Heart left ventricle (tissue), 16 donors: ENCODE measurements at regions of chr16 and their contacts with region 1.

Region 1: GRCh38 chr16:3857189-3858043 is 23.1 kb downstream of the CREBBP start:
- DNase-seq: no peak
- ATAC-seq: peak; percentile 37 to 85 (median 68)
- H3K4me3 ChIP-seq: no peak overlapping the region
- H3K27ac ChIP-seq: peak overlapping the region in 5 of 12 donors; percentile 4 to 81 (median 11)
- H3K4me1 ChIP-seq: peaks cover 7 to 98% (median 72%) of the 10 kb centered on the region in 12 donors
- H3K27me3 ChIP-seq: no peaks in the 10 kb centered on the region
- CTCF ChIP-seq: no peak
- POLR2A ChIP-seq: no peak

Region 2: DNA sequence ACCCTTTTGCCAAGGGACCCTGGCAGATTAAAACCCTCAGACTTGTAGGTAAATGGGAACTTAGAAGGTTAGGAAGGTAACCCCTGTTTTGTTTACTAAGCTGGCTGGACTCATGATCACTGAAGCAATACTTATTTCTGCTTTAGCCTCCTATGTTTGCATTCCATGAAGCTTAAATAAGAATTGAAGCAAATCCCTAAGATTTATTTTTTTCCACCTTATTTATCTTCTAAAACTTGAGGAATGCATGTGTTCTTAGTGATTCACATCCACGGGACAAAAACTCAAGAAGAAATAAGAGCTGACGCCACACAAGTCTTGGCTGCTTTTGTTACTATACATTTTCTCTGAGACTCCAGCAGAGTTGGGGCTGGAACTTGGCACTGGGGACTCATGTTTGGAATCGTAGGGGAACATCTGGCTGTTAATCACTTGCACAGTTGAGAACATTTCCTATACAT is 321.1 kb before region 1 on chr16:
- intact Hi-C with region 1: no loop called
- DNase-seq: no peak
- ATAC-seq: no peak
- H3K4me3 ChIP-seq: no peak overlapping the region
- H3K27ac ChIP-seq: peak overlapping the region in 7 of 12 donors; percentile 6 to 70 (median 53)
- H3K4me1 ChIP-seq: peaks cover 0 to 9% (median 1%) of the 10 kb centered on the region in 12 donors
- H3K27me3 ChIP-seq: no peaks in the 10 kb centered on the region
- CTCF ChIP-seq: no peak
- POLR2A ChIP-seq: no peak

Region 3: DNA sequence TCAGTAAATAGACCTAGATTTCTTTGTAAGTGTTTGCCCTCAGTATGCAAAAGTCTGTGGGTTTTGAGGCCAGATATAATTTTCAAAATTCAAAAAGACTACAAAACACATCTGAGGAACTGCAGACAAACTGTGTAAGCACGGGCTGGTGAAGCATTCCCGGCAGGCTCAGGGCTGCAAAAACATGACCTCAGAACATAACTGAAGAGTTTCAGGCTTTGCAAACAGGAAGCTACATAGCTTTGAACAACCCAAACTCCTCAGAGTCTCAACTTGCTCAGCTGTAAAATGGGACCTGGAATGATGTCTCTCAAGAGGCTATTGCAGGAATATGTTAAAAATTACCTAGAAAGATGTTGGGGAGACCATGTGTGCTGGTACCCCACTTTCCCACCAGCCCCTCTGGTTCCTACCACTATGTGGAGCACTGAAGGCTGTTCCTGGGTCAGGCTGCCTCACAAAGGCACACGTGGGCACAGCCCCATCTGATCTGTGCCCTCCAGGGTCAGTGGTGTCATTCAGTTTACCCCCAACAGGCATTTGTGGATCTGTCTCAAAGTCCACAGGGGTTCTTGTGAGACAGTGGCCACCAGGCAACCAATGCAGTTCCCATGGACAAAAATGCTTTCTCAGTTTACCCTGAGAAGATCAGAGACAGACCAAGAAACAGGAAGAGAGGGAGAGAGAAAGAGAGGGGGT is 49.8 kb before region 1 on chr16:
- intact Hi-C with region 1: loop called in 1 of 10 experiments (anchors 10 kb)
- DNase-seq: no peak
- ATAC-seq: no peak
- H3K4me3 ChIP-seq: no peak overlapping the region
- H3K27ac ChIP-seq: no peak overlapping the region
- H3K4me1 ChIP-seq: peaks cover 0 to 72% (median 53%) of the 10 kb centered on the region in 12 donors
- H3K27me3 ChIP-seq: no peaks in the 10 kb centered on the region
- CTCF ChIP-seq: no peak
- POLR2A ChIP-seq: no peak

Region 4: GRCh38 chr16:3878610-3879009 is 21.2 kb after region 1 on chr16:
- intact Hi-C with region 1: no loop called
- DNase-seq: no peak
- ATAC-seq: no peak
- H3K4me3 ChIP-seq: peak overlapping the region in 11 of 12 donors; percentile 60 to 94 (median 84)
- H3K27ac ChIP-seq: no peak overlapping the region
- H3K4me1 ChIP-seq: peaks cover 10 to 61% (median 52%) of the 10 kb centered on the region in 12 donors
- H3K27me3 ChIP-seq: no peaks in the 10 kb centered on the region
- CTCF ChIP-seq: no peak
- POLR2A ChIP-seq: no peak